K562 (cell line): ENCODE measurements at regions of chr15 and their contacts with region 1.

Region 1: GRCh38 chr15:55290528-55291057 is 980 bp upstream of the RAB27A start:
- DNase-seq: peak; percentile 71 to 91 (median 77)
- ATAC-seq: peak; percentile 76
- H3K4me3 ChIP-seq: peak overlapping the region; percentile 88
- H3K27ac ChIP-seq: peak overlapping the region; percentile 94
- H3K4me1 ChIP-seq: peaks cover 18 to 22% of the 10 kb centered on the region in 2 experiments
- H3K27me3 ChIP-seq: no peaks in the 10 kb centered on the region
- CTCF ChIP-seq: peak; percentile 85 to 94 (median 92)
- EP300 ChIP-seq: 0 out of 2 replicates have a peak, but pooled peaks have one; percentile 10
- POLR2A ChIP-seq: no peak
- RAD21 ChIP-seq: peak; percentile 94 to 95

Region 2: GRCh38 chr15:55108858-55109518 is 181.6 kb before region 1 on chr15:
- CTCF ChIA-PET with region 1: no interaction called
- POLR2A ChIA-PET with region 1: no interaction called
- in situ Hi-C with region 1: no loop called
- intact Hi-C with region 1: loop called (anchors 2 kb)
- DNase-seq: peak; percentile 67 to 72 (median 69)
- ATAC-seq: peak; percentile 89
- H3K4me3 ChIP-seq: no peak overlapping the region
- H3K27ac ChIP-seq: peak overlapping the region; percentile 37; the same call in 1 of the 3 replicates
- H3K4me1 ChIP-seq: peaks cover 0 to 8% of the 10 kb centered on the region in 2 experiments; a peak in 2 of 5 replicates
- H3K27me3 ChIP-seq: no peaks in the 10 kb centered on the region
- CTCF ChIP-seq: peak; percentile 65 to 80 (median 77)
- EP300 ChIP-seq: no peak
- POLR2A ChIP-seq: no peak
- RAD21 ChIP-seq: peak; percentile 28 to 62; a peak in 2 of 4 replicates

Region 3: GRCh38 chr15:55221090-55222011 is 69.2 kb before region 1 on chr15:
- CTCF ChIA-PET with region 1: interaction called, 36 read pairs
- POLR2A ChIA-PET with region 1: interaction called, 3 read pairs
- in situ Hi-C with region 1: loop called (anchors 5 kb)
- intact Hi-C with region 1: loop called (anchors 1 kb)
- DNase-seq: no peak
- ATAC-seq: peak; percentile 19
- H3K4me3 ChIP-seq: no peak overlapping the region
- H3K27ac ChIP-seq: peak overlapping the region; percentile 35; the same call in 1 of the 3 replicates
- H3K4me1 ChIP-seq: peaks cover 0 to 28% of the 10 kb centered on the region in 2 experiments; a peak in 4 of 5 replicates
- H3K27me3 ChIP-seq: no peaks in the 10 kb centered on the region
- CTCF ChIP-seq: no peak
- EP300 ChIP-seq: no peak
- POLR2A ChIP-seq: no peak
- RAD21 ChIP-seq: 0 out of 4 replicates have a peak, but pooled peaks of 1 of the 2 experiments have one; percentile 12

Region 4: DNA sequence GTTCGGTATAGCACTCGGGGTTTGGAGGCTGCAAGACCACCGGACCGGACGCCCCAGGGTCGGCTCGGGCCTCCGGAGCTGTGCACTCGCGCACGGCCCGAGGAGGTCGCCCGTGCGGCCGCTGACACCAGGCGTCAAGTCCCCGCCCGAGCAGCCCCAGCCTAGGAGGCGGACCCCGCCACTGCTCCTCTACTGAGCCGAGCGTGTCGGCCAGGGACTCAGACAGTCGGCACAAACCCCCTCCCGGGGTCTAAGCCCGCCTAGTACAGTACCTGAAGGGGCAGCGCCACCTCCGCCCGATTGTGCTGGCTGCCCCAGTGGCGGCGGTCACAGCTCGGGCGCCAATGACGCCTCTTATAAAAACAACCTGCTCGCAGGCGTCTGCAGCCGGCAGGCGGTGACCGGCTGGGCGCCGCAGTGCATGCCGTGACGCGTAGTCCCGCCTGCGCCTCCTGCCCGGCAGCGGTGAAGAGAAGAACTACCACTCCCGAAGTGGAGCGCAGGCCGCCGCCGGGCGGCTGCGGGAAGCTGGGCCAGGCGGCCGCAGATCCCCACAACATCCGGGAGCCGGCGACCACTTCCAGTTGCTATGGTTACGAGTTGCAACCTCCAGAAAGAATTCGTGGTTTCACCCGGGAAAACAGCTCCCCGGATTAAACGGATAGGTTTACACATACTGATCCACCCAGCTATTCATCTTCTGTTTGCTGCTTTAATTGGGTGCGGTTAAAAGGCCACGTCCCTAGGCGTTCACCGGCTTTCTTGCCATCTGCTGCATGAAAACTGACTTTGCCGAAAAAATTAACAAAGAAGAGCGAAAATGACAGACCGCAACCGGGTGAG is 117.6 kb after region 1 on chr15 and contains the starts of genes CCPG1 and PIERCE2:
- CTCF ChIA-PET with region 1: no interaction called
- POLR2A ChIA-PET with region 1: interaction called, 3 read pairs
- in situ Hi-C with region 1: no loop called
- intact Hi-C with region 1: loop called (anchors 2 kb)
- DNase-seq: peak; percentile 89 to 95 (median 90)
- ATAC-seq: peak; percentile 84
- H3K4me3 ChIP-seq: peak within 1 kb of the TSS; percentile 69
- H3K27ac ChIP-seq: peak within 1 kb of the TSS; percentile 91
- H3K4me1 ChIP-seq: peaks cover 12 to 16% of the 10 kb centered on the region in 2 experiments
- H3K27me3 ChIP-seq: no peaks in the 10 kb centered on the region
- CTCF ChIP-seq: peak; percentile 73 to 98 (median 77)
- EP300 ChIP-seq: no peak
- POLR2A ChIP-seq: peak; percentile 83
- RAD21 ChIP-seq: peak; percentile 29 to 39; a peak in 2 of 4 replicates
- polyA plus RNA-seq, gene CCPG1: 37.1 to 41.1 TPM
- polyA plus RNA-seq, gene PIERCE2: 4.0 to 4.2 TPM

Region 5: GRCh38 chr15:55649054-55649423 is 358.4 kb after region 1 on chr15:
- CTCF ChIA-PET with region 1: no interaction called
- POLR2A ChIA-PET with region 1: no interaction called
- in situ Hi-C with region 1: no loop called
- intact Hi-C with region 1: loop called (anchors 10 kb)
- DNase-seq: no peak
- ATAC-seq: no peak
- H3K4me3 ChIP-seq: no peak overlapping the region
- H3K27ac ChIP-seq: no peak overlapping the region
- H3K4me1 ChIP-seq: no peaks in the 10 kb centered on the region
- H3K27me3 ChIP-seq: peaks cover 0 to 6% of the 10 kb centered on the region in 2 experiments; a peak in 2 of 5 replicates
- CTCF ChIP-seq: no peak
- EP300 ChIP-seq: no peak
- POLR2A ChIP-seq: no peak
- RAD21 ChIP-seq: no peak